Mammary epithelial cell (primary cell): ENCODE measurements at regions of chr18 and their contacts with region 1.

Region 1: DNA sequence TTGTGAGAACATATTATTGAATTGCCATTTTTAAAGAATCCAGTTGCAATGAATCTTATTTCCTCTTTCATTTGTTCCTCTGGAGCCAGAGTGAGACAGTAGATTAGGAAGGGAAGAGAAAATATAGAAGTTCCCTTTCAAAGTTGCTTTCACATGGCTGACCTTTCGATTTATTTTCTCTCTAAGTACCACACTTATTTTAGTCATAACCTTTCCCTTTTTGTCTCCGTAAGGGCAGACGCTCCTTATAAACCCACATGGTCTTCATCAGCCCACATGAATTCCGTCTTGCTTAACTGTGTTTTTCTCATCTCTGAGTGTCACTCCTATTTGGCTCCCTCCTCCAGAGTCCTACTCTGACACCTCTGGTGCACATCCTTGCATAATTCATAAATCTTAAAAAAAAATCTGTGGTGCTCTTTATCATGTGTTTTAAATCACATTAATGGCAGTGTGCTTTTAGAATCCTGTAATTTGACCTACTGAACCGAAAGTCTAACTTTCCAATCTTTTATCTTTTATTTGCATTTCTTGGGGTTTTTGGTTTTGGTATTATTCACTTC is 38.5 kb upstream of the ZNF396 start:
- DNase-seq: no peak
- H3K4me3 ChIP-seq: no peak overlapping the region
- H3K27ac ChIP-seq: no peak overlapping the region
- H3K4me1 ChIP-seq: peaks cover 16% of the 10 kb centered on the region
- H3K27me3 ChIP-seq: no peaks in the 10 kb centered on the region
- CTCF ChIP-seq: no peak

Region 2: DNA sequence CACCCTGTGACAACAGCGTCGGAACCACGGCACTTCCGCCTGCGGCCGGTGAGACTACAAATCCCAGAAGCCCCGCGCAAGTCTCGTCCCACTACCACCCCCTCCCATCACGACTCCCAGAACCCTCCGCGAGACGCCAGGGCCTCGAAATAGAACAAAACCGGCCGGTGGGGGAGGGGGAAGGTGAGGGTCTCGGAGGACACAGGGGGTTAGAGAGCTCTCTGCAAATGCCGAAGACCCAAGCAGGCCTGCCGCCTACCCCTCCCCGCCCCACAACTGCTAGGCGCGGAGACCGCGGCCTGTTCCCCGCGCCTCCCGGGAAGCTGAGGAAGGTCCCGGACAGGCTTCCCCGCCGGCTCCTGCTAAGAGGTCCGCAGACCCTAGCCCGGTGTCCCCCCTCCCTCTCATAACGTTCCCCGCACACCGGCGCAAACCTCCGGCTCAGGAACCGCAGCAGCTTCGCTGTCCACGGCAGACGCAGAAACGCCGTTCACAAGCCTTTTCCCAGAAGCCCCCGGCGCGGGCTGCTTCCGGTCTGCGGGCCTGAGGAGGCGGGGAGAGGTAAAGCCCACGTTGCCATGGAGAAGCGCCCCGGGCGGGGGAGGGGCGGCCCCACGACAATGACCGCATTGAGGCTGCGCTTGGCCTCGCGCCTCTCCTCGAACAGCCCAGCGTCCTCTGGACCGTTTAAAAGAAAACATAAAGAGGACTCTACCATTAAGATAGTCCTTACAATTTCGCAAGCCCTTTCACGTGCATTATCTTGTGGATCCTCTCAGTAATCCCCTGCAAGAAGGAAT is 71.5 kb before region 1 on chr18 and contains the start of gene ZNF24:
- CTCF ChIA-PET with region 1: no interaction called
- dilution Hi-C with region 1: no loop called
- in situ Hi-C with region 1: no loop called
- intact Hi-C with region 1: no loop called
- DNase-seq: peak; percentile 87
- H3K4me3 ChIP-seq: peak within 1 kb of the TSS; percentile 76 to 92 (median 76)
- H3K27ac ChIP-seq: peak within 1 kb of the TSS; percentile 90
- H3K4me1 ChIP-seq: peaks cover 7% of the 10 kb centered on the region
- H3K27me3 ChIP-seq: no peaks in the 10 kb centered on the region
- CTCF ChIP-seq: no peak
- total RNA-seq, gene ZNF24: 32.8 to 36.3 TPM

Region 3: GRCh38 chr18:35478520-35479435 is 63.2 kb after region 1 on chr18:
- CTCF ChIA-PET with region 1: interaction called, 10 read pairs
- dilution Hi-C with region 1: no loop called
- in situ Hi-C with region 1: no loop called
- intact Hi-C with region 1: no loop called
- DNase-seq: peak; percentile 100
- H3K4me3 ChIP-seq: peak overlapping the region; percentile 46 to 65 (median 63)
- H3K27ac ChIP-seq: peak overlapping the region; percentile 100
- H3K4me1 ChIP-seq: peaks cover 37% of the 10 kb centered on the region
- H3K27me3 ChIP-seq: no peaks in the 10 kb centered on the region
- CTCF ChIP-seq: peak in 1 of 2 donors; percentile 5

Region 4: DNA sequence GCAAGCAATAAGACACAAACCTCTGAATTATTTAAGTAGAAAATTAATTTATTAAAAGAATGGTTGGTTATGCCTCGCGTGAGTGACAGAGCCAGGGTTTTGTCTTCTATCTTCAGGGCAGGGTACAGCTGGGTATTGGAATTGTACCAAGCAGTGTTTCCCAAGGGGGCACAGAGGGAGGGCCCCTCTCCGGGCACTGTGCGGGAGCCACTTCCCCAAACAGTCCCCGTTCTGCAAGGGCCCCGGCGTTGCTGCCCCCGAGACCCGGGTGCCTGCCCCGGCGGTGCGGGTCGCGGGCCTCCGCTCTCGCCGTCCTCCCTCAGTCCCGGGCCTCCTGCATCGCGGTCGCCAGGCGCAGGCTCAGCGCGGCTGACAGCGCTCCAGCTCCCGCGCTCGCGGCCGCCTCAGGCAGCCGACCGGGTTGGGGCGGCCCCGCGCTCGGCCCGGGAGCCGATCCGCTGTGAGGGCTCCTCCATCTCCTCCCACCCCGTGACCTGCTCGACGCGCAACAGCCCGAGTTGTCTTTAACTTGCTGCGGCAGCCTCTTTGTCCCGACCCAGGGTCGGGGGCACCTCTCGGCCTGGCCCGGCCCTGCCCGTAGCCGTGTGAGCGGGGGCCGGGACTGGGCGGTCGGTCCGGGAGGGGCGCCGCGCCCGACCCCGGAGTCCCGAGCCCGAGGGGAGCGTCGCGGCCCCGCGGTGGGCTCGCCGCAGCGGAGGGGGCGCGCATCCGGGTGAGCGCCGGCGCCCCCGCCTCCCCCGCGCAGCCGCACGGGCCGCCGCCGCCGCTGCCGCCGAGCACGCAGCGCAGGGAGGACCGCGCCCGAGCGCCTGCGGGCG is 165.3 kb after region 1 on chr18:
- CTCF ChIA-PET with region 1: no interaction called
- dilution Hi-C with region 1: no loop called
- in situ Hi-C with region 1: loop called in 1 of 2 experiments (anchors 10 kb)
- intact Hi-C with region 1: no loop called
- DNase-seq: peak; percentile 58
- H3K4me3 ChIP-seq: peak overlapping the region; percentile 65 to 77 (median 69)
- H3K27ac ChIP-seq: peak overlapping the region; percentile 55
- H3K4me1 ChIP-seq: peaks cover 9% of the 10 kb centered on the region
- H3K27me3 ChIP-seq: no peaks in the 10 kb centered on the region
- CTCF ChIP-seq: no peak